Aorta (tissue), 5 donors: ENCODE measurements at regions of chr5 and their contacts with region 1.

Region 1: DNA sequence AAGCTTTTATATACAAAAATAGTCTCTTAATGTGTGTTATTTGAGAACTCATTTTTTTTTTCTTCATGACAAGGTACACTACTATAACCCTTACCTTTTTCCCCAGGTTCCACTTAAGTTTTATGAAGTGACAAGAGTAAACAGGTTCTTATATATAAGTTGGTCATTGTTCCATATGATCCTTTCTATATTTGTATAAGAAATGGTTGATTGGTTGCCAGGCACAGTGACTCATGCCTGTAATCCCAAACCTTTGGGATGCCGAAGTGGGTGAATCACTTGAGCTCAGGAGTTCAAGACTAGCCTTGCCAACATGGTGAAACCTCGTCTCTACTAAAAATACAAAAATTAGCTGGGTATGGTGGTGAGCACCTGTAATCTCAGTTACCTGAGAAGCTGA is 108.3 kb downstream of the PCSK1 start:
- DNase-seq: no peak
- ATAC-seq: no peak
- H3K4me3 ChIP-seq: no peak overlapping the region
- H3K27ac ChIP-seq: no peak overlapping the region
- H3K4me1 ChIP-seq: peaks cover 2 to 3% of the 10 kb centered on the region in 2 donors
- H3K27me3 ChIP-seq: no peaks in the 10 kb centered on the region

Region 2: GRCh38 chr5:96093890-96094381 is 230.8 kb before region 1 on chr5:
- intact Hi-C with region 1: no loop called
- DNase-seq: no peak
- ATAC-seq: no peak
- H3K4me3 ChIP-seq: no peak overlapping the region
- H3K27ac ChIP-seq: no peak overlapping the region
- H3K4me1 ChIP-seq: peaks cover 2 to 10% of the 10 kb centered on the region in 2 donors
- H3K27me3 ChIP-seq: no peaks in the 10 kb centered on the region

Region 3: DNA sequence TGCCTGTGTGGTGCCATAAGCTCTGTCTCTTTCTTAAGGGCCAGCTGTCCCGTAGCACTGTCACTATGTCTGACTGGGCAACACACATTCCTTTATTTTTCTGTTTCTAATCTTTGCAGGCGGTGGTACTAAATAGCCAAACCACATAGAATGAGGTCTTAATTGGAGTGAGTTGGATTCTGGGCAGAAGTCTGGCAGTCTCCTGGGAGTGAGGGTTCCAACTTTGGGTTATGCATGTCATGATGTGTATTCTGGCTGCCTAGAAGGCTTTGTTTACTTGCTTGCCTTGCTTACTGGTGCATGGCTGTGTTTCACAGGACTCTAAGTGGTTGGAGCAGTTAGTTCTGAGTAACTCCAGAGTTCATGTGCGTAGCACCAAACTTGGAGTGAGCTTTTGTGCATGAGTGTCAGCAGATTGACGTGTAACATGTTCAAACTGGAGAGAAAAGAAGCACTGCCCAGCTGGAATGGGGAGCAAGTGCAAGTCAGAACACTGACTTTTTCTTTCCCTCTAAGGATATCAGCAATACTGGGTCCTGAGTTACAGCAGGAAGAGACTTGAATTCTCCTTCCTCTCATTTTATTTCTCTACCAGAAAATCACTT is 77.5 kb before region 1 on chr5:
- intact Hi-C with region 1: loop called in 1 of 2 experiments (anchors 5 kb)
- DNase-seq: peak in 1 of 2 donors; percentile 47
- ATAC-seq: peak; percentile 86
- H3K4me3 ChIP-seq: peak overlapping the region in 1 of 2 donors; percentile 10
- H3K27ac ChIP-seq: peak overlapping the region; percentile 92 to 95
- H3K4me1 ChIP-seq: peaks cover 0 to 11% of the 10 kb centered on the region in 2 donors
- H3K27me3 ChIP-seq: no peaks in the 10 kb centered on the region